ENCODE measurements at regions of chr7 and their contacts with region 1.

Region 1: GRCh38 chr7:22647451-22648257 is 79.3 kb upstream of the IL6 start:
- DNase-seq: peak; percentile 74
- H3K4me3 ChIP-seq: no peak overlapping the region
- H3K27ac ChIP-seq: peak overlapping the region; percentile 93
- H3K4me1 ChIP-seq: peaks cover 49% of the 10 kb centered on the region
- H3K27me3 ChIP-seq: no peaks in the 10 kb centered on the region
- CTCF ChIP-seq: no peak
- POLR2A ChIP-seq: peak; percentile 31

Region 2: DNA sequence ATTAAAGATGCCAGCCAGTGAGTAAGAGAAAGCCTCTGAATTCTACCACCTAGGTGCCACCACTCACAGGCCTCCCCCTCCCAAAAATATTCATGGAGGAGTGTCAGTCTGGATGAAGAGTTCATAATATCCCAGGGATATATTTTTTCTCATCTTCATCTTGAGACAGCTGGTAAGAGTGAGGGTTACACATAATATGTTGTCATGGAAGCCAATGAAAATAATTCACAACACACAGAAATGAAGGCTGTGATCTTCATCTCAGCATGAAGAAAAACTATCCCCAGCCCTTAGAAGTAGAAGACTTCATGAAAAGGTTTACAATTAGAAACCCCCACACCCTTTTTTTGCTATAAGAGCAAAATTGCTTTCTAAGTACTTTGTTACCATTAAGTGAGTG is 929.3 kb before region 1 on chr7:
- CTCF ChIA-PET with region 1: no interaction called
- POLR2A ChIA-PET with region 1: no interaction called
- dilution Hi-C with region 1: no loop called
- intact Hi-C with region 1: no loop called
- DNase-seq: no peak
- H3K4me3 ChIP-seq: no peak overlapping the region
- H3K27ac ChIP-seq: no peak overlapping the region
- H3K4me1 ChIP-seq: no peaks in the 10 kb centered on the region
- H3K27me3 ChIP-seq: no peaks in the 10 kb centered on the region
- CTCF ChIP-seq: no peak
- POLR2A ChIP-seq: no peak

Region 3: GRCh38 chr7:22577396-22578001 is 70.2 kb before region 1 on chr7:
- CTCF ChIA-PET with region 1: interaction called, 10 read pairs
- POLR2A ChIA-PET with region 1: interaction called, 5 read pairs
- dilution Hi-C with region 1: no loop called
- intact Hi-C with region 1: loop called (anchors 1 kb)
- DNase-seq: peak; percentile 94
- H3K4me3 ChIP-seq: peak overlapping the region in 1 of 3 experiments; percentile 34
- H3K27ac ChIP-seq: peak overlapping the region; percentile 99
- H3K4me1 ChIP-seq: peaks cover 47% of the 10 kb centered on the region
- H3K27me3 ChIP-seq: no peaks in the 10 kb centered on the region
- CTCF ChIP-seq: no peak
- POLR2A ChIP-seq: peak; percentile 20

Region 4: DNA sequence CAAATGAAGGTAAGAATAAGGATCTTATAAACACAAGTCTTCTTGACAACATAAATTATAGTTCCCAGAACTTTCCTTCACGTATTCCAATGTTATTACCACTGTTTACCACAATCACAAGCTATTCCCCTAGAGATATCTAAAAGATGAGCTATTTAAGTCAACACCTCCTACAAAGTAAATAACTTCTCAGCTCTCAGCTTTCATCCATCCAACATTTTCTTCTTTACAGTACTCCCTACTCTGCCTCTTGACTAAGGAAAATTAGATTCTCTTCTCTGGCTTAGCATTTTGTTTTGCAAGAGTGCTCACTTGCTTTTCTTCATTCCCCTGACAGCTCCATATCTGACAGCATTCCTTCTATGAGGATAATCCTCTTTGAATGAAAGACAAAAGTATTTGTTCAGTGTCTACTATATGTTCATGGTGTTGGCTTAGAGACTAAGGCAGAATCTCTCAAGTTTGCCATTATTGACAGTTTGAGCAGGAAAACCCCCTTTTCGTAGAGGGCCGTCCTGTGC is 13.6 kb before region 1 on chr7:
- CTCF ChIA-PET with region 1: interaction called, 7 read pairs
- POLR2A ChIA-PET with region 1: interaction called, 9 read pairs
- dilution Hi-C with region 1: no loop called
- intact Hi-C with region 1: loop called (anchors 1 kb)
- DNase-seq: no peak
- H3K4me3 ChIP-seq: no peak overlapping the region
- H3K27ac ChIP-seq: peak overlapping the region; percentile 92
- H3K4me1 ChIP-seq: peaks cover 41% of the 10 kb centered on the region
- H3K27me3 ChIP-seq: no peaks in the 10 kb centered on the region
- CTCF ChIP-seq: no peak
- POLR2A ChIP-seq: no peak

Region 5: GRCh38 chr7:22672846-22673652 is 25.4 kb after region 1 on chr7:
- CTCF ChIA-PET with region 1: no interaction called
- POLR2A ChIA-PET with region 1: no interaction called
- dilution Hi-C with region 1: no loop called
- intact Hi-C with region 1: loop called (anchors 1 kb)
- DNase-seq: no peak
- H3K4me3 ChIP-seq: no peak overlapping the region
- H3K27ac ChIP-seq: no peak overlapping the region
- H3K4me1 ChIP-seq: peaks cover 65% of the 10 kb centered on the region
- H3K27me3 ChIP-seq: no peaks in the 10 kb centered on the region
- CTCF ChIP-seq: no peak
- POLR2A ChIP-seq: no peak

Region 6: GRCh38 chr7:22854158-22855048 is 206.7 kb after region 1 on chr7:
- CTCF ChIA-PET with region 1: no interaction called
- POLR2A ChIA-PET with region 1: no interaction called
- dilution Hi-C with region 1: no loop called
- intact Hi-C with region 1: loop called (anchors 10 kb)
- DNase-seq: peak; percentile 72
- H3K4me3 ChIP-seq: peak overlapping the region; percentile 76 to 88 (median 86)
- H3K27ac ChIP-seq: peak overlapping the region; percentile 74
- H3K4me1 ChIP-seq: peaks cover 36% of the 10 kb centered on the region
- H3K27me3 ChIP-seq: no peaks in the 10 kb centered on the region
- CTCF ChIP-seq: peak; percentile 41 to 58
- POLR2A ChIP-seq: peak; percentile 84

Region 7: GRCh38 chr7:23026164-23026563 is 378.5 kb after region 1 on chr7:
- CTCF ChIA-PET with region 1: no interaction called
- POLR2A ChIA-PET with region 1: no interaction called
- dilution Hi-C with region 1: no loop called
- intact Hi-C with region 1: no loop called
- DNase-seq: no peak
- H3K4me3 ChIP-seq: no peak overlapping the region
- H3K27ac ChIP-seq: no peak overlapping the region
- H3K4me1 ChIP-seq: peaks cover 7% of the 10 kb centered on the region
- H3K27me3 ChIP-seq: no peaks in the 10 kb centered on the region
- CTCF ChIP-seq: no peak
- POLR2A ChIP-seq: no peak